Mucosa of descending colon (tissue), 3 donors: ENCODE measurements at regions of chr2 and their contacts with region 1.

Region 1: DNA sequence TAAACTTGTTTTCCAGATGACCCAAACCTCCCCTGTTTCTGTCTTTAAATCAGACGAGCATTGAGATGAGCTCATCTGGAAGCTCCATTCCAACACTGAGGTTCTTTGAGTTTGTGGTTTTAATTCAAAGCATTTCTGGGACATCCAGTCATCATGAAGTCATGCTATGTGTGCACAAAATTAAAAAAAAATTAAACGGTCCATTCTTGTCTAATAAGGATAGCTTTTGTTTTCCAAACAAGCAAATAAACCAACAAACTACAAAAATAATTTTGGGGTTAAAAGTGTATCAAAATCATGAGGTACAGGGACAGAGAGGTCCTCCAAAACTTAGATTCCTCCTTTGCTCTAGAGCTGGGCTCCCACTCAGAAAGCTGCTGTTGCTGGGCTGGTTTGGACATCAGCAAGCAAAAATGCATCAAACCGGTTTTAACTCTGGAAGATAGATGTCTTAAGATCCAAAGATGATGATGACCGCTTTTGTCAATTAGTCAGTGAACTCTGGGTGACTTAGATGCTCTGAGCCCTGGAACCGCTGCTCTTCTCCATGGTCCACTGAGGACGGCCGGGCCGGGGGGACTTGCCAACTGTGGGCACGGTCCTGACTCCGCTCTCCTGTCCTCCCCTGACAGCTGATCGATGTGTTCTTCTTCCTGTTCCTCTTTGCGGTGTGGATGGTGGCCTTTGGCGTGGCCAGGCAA is 65.4 kb downstream of the TRPM8 start:
- DNase-seq: no peak
- ATAC-seq: no peak
- H3K4me3 ChIP-seq: no peak overlapping the region
- H3K4me1 ChIP-seq: no peaks in the 10 kb centered on the region
- CTCF ChIP-seq: no peak

Region 2: DNA sequence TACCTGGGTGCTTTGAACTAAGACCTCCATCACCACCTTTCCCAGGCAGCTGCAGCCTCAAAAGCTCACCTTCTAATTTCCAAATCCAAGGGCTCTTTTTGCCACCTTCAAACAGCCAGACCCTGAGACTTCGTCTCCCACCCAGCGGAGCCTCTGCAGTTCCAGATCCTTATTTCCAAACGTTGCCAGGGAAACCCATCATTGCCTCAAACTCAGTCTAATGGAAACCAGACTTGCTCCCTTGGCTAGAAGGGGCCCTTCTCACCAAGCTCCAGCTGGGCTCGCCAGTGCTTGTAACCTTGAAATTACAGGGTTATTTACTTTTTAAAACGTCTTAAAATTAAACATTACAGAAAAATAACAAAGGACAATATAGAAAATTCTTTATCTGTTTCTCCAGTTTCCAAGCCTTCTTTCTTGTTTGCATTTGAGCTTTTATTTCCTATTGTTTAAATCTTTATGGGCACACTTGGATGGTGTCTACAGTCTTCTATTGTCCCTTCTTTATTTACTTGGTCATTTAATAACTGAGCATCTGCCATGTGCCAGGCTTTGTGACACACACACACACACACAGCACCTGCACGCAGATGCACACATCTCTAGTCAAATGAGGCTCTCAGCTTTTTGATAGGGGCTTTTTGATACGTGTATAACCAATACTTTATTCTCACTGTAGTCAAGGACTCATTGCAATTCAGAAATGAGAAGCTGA is 29.3 kb before region 1 on chr2:
- intact Hi-C with region 1: no loop called
- DNase-seq: no peak
- ATAC-seq: no peak
- H3K4me3 ChIP-seq: no peak overlapping the region
- H3K4me1 ChIP-seq: no peaks in the 10 kb centered on the region
- CTCF ChIP-seq: no peak

Region 3: GRCh38 chr2:234125451-234126145 is 143.0 kb after region 1 on chr2:
- intact Hi-C with region 1: no loop called
- DNase-seq: no peak
- ATAC-seq: no peak
- H3K4me3 ChIP-seq: no peak overlapping the region
- H3K4me1 ChIP-seq: no peaks in the 10 kb centered on the region
- CTCF ChIP-seq: no peak

Region 4: DNA sequence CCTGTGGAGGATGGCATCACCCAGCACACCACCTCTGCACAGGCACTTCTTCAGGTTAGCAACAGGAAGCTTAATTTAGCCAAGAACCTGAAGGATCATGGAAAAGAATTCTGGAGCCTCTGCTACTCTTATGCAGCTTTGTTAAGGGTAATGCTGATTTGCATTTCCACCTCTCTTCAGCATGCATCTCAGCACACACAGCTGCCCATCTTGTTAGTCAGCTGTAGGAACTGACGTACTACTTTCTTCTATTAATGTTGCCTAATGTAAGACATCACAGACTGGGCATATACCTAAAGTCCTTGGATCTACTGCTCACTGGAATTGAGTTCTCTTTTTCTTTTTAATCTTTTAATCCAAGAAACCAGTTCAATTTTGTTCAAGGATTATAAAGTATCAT is 248.9 kb after region 1 on chr2:
- intact Hi-C with region 1: no loop called
- DNase-seq: no peak
- ATAC-seq: no peak
- H3K4me3 ChIP-seq: no peak overlapping the region
- H3K4me1 ChIP-seq: no peaks in the 10 kb centered on the region
- CTCF ChIP-seq: no peak

Region 5: DNA sequence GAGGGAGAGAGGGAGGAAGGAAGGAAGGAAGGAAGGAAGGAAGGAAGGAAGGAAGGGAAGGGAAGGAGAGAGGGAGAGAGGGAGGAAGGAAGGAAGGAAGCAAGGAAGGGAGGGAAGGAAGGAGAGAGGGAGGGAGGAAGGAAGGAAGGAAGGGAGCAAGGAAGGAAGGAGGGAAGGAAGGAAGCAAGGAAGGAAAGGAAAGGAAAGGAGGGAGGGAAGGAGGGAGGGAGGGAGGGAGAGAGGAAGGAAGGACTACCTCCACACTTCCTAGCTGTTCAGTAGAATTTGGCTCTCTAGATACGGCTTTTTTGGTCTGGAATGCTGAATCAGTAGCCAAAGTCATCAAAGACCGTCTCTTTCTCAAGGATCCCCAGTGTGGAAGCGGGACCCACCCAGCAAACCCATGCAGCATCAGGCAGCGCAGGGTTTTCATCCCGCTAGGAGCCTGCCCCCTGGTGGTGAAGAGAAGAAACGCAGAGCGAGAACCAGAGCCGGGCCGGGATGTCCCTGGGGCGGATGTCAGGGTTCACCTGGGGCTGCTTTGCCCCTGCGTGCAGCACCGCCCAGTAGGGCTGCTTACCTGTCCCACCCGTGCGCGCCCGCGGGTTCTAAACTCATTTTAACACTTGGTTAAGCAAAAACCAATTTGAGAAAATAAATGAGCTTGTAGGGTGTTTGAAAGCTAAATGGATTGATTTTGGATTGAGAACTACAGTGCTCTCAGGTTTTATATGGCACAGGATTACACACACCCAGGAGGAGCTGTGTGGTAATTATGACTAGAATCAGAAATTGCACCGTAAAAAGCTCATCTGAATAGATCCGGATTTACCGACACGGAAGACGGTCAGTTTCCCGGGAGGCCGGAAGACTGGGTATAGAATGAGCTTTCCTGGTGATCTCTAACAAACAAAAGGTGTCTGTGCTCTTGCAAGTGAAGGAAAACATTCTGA is 562.4 kb after region 1 on chr2:
- intact Hi-C with region 1: loop called in 1 of 2 experiments (anchors 10 kb)
- DNase-seq: peak; percentile 61 to 77 (median 75)
- ATAC-seq: peak; percentile 94
- H3K4me3 ChIP-seq: no peak overlapping the region
- H3K4me1 ChIP-seq: peaks cover 6% of the 10 kb centered on the region
- CTCF ChIP-seq: peak; percentile 88